ENCODE measurements at regions of chr15 and their contacts with region 1.

Region 1: GRCh38 chr15:84748274-84749110 is at the start of gene ZNF592:
- DNase-seq: peak; percentile 88
- ATAC-seq: peak; percentile 62
- H3K4me3 Mint-ChIP-seq: peak within 1 kb of the TSS; percentile 97
- H3K27ac Mint-ChIP-seq: peak within 1 kb of the TSS; percentile 99
- H3K4me1 Mint-ChIP-seq: peaks cover 70% of the 10 kb centered on the region
- H3K27me3 Mint-ChIP-seq: no peaks in the 10 kb centered on the region
- CTCF ChIP-seq: no peak
- total RNA-seq, gene ZNF592: 40.6 and 44.3 TPM in 2 replicates

Region 2: GRCh38 chr15:83305704-83306291 is 1442.7 kb before region 1 on chr15:
- CTCF ChIA-PET with region 1: no interaction called
- POLR2A ChIA-PET with region 1: no interaction called
- intact Hi-C with region 1: no loop called
- DNase-seq: no peak
- ATAC-seq: no peak
- H3K4me3 Mint-ChIP-seq: no peak overlapping the region
- H3K27ac Mint-ChIP-seq: no peak overlapping the region
- H3K4me1 Mint-ChIP-seq: no peaks in the 10 kb centered on the region
- H3K27me3 Mint-ChIP-seq: peaks cover 16% of the 10 kb centered on the region
- CTCF ChIP-seq: no peak

Region 3: DNA sequence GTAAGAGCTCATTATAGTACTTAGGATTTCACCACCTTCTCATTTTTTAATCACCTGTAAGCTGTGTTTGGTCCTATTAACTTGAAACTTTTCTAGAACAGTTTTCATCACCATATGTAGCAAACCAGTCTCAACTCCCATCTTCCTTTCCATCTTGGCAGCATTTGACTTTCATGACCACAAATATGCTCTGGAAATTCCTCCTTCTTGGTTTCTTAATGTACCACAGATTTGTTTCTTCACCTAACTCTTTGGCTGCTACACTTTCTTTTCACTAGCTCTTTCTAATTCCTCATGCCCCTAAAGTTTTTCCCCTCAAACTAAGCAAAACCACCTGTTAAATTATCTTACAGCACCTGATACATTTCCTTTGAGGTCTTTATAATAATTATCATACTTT is 77.3 kb before region 1 on chr15:
- CTCF ChIA-PET with region 1: no interaction called
- POLR2A ChIA-PET with region 1: interaction called, 10 read pairs
- intact Hi-C with region 1: no loop called
- DNase-seq: no peak
- ATAC-seq: no peak
- H3K4me3 Mint-ChIP-seq: no peak overlapping the region
- H3K27ac Mint-ChIP-seq: no peak overlapping the region
- H3K4me1 Mint-ChIP-seq: no peaks in the 10 kb centered on the region
- H3K27me3 Mint-ChIP-seq: no peaks in the 10 kb centered on the region
- CTCF ChIP-seq: no peak

Region 4: DNA sequence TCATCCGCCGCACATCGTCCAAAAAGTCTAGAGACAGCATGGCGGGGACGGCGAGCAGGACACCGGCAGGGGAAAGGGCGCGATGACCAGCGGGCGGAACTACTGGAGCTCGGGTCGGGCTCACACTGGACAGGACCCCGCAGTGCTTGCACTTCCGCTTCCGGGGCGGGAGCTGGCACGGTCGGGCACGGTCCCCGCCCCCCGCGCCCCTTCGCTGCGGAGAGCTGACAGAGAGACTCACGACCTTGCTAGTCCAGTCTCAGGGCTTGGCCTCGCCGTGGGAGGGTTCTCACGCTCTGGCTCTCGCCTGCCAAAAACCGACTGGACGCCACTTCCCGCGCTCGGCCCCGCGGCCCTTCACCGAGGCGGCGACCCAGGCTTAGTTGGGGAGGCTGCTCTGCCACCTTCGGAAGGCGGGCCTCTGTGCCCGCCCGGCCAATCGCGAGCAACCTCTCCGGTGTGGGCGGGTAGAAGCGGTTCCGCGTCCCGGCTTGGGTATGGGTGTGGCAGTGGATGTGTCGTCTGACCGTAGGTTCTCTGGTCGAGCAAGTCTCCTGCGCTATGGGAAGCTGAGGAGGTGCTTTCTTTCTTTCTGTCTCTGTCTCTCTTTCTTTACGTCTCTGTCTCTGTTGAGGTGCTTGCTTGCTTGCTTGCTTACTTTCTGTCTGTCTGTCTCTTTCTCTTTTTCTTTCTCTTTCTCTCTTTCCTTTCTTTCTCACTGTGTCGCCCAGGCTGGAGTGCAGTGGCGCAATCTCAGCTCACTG is 32.3 kb before region 1 on chr15 and contains the start of gene SEC11A:
- CTCF ChIA-PET with region 1: interaction called, 9 read pairs
- POLR2A ChIA-PET with region 1: interaction called, 127 read pairs
- intact Hi-C with region 1: loop called (anchors 1 kb)
- DNase-seq: peak; percentile 96
- ATAC-seq: peak; percentile 95
- H3K4me3 Mint-ChIP-seq: peak within 1 kb of the TSS; percentile 93
- H3K27ac Mint-ChIP-seq: peak within 1 kb of the TSS; percentile 92
- H3K4me1 Mint-ChIP-seq: peaks cover 49% of the 10 kb centered on the region
- H3K27me3 Mint-ChIP-seq: no peaks in the 10 kb centered on the region
- CTCF ChIP-seq: no peak
- total RNA-seq, gene SEC11A: 68.9 and 71.2 TPM in 2 replicates

Region 5: DNA sequence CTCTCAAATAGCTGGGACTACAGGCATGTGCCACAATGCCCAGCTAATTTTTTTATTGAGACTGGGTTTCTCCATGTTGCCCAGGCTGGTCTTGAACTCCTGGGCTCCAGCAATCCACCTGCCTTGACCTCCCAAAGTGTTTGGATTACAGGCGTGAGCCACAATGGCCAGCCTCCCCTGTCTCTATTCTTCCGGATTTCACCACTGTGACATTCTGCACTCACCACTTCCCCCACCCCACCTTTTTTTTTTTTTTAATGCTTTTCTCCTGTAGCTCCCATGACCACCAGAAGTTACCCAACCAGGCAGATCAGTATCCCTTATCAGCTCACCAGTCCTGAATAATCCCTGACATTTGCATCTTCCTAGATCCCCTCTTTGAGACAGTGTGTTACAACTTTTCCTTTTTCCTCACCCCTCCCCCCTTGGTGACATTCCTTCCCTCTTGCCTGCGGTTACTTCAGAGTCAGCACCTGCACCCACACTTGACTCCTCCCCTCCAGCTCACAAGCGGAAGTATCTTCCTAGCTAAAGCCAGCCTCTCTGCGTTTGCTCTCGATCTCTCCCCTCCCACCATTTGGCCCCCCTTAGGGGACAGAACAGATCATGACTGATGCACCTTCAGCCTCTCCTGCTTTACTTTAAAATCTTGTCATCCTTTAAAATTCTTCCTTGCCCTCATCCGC is 13.6 kb before region 1 on chr15:
- CTCF ChIA-PET with region 1: interaction called, 9 read pairs
- POLR2A ChIA-PET with region 1: interaction called, 59 read pairs
- intact Hi-C with region 1: loop called (anchors 1 kb)
- DNase-seq: peak; percentile 41
- ATAC-seq: peak; percentile 90
- H3K4me3 Mint-ChIP-seq: peak overlapping the region; percentile 73
- H3K27ac Mint-ChIP-seq: peak overlapping the region; percentile 91
- H3K4me1 Mint-ChIP-seq: peaks cover 46% of the 10 kb centered on the region
- H3K27me3 Mint-ChIP-seq: no peaks in the 10 kb centered on the region
- CTCF ChIP-seq: no peak

Region 6: GRCh38 chr15:84783496-84784251 is 35.2 kb after region 1 on chr15:
- CTCF ChIA-PET with region 1: no interaction called
- POLR2A ChIA-PET with region 1: interaction called, 16 read pairs
- intact Hi-C with region 1: loop called (anchors 5 kb)
- DNase-seq: no peak
- ATAC-seq: no peak
- H3K4me3 Mint-ChIP-seq: no peak overlapping the region
- H3K27ac Mint-ChIP-seq: no peak overlapping the region
- H3K4me1 Mint-ChIP-seq: peaks cover 41% of the 10 kb centered on the region
- H3K27me3 Mint-ChIP-seq: no peaks in the 10 kb centered on the region
- CTCF ChIP-seq: no peak

Measured in activated B cell treated with CpG ODN at 0.5 μM for 24 hours (primary cell).